AG04450 (cell line): ENCODE measurements at regions of chr7 and their contacts with region 1.

Region 1: GRCh38 chr7:107168233-107169119 is at the start of gene HBP1:
- DNase-seq: peak; percentile 100
- H3K4me3 ChIP-seq: peak within 1 kb of the TSS; percentile 83
- H3K27ac ChIP-seq: peak within 1 kb of the TSS; percentile 99
- H3K27me3 ChIP-seq: no peaks in the 10 kb centered on the region
- CTCF ChIP-seq: no peak
- polyA plus RNA-seq, gene HBP1: 72.7 and 85.2 TPM in 2 replicates

Region 2: GRCh38 chr7:106947244-106947728 is 221.2 kb before region 1 on chr7:
- CTCF ChIA-PET with region 1: interaction called, 11 read pairs
- POLR2A ChIA-PET with region 1: interaction called, 3 read pairs
- DNase-seq: peak; percentile 69
- H3K4me3 ChIP-seq: no peak overlapping the region
- H3K27ac ChIP-seq: no peak overlapping the region
- H3K27me3 ChIP-seq: peaks cover 5% of the 10 kb centered on the region
- CTCF ChIP-seq: peak; percentile 85

Region 3: GRCh38 chr7:107035446-107035845 is 133.0 kb before region 1 on chr7:
- CTCF ChIA-PET with region 1: no interaction called
- POLR2A ChIA-PET with region 1: no interaction called
- DNase-seq: peak; percentile 61
- H3K4me3 ChIP-seq: no peak overlapping the region
- H3K27ac ChIP-seq: no peak overlapping the region
- H3K27me3 ChIP-seq: no peaks in the 10 kb centered on the region
- CTCF ChIP-seq: no peak

Region 4: DNA sequence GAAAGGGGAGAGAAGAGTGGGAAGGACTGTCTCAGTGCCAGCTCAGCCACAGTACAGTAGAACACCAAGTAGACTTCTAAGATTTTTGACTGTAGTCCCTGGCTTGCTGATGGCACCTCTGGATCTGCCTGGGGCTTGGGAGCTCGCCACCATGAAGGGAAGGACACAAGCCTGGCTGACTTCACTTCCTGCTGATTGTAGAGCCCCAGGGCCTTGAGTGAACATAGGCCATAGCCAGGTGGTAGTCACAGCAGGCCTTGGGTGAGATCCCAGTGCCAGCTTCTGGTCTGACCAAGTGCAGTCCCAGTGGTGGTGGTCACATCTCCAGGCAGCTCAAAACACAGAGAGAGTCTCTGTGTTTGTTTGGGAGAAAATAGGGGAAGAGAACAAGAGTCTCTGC is 57.3 kb before region 1 on chr7:
- CTCF ChIA-PET with region 1: no interaction called
- POLR2A ChIA-PET with region 1: no interaction called
- DNase-seq: no peak
- H3K4me3 ChIP-seq: no peak overlapping the region
- H3K27ac ChIP-seq: no peak overlapping the region
- H3K27me3 ChIP-seq: no peaks in the 10 kb centered on the region
- CTCF ChIP-seq: no peak

Region 5: DNA sequence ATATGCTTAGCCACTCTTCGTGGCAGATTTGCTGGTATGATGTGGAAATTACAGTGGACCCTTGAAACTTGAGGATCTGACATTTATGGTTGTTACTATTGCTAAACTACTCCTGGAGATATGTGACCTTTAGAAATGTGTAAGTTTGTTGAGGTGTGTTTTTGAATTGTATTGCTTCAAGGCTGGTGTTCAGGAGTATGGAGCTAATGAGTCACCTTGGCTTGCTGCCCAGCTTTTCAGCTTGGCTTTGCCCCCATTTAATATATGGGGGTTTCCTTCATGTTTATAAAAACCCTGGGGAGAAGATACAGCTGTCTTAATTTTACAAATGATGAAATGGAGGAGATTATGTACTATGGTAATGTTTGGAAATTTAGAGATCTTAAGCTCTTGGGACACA is 11.9 kb after region 1 on chr7:
- CTCF ChIA-PET with region 1: interaction called, 4 read pairs
- POLR2A ChIA-PET with region 1: interaction called, 44 read pairs
- DNase-seq: peak; percentile 75
- H3K4me3 ChIP-seq: no peak overlapping the region
- H3K27ac ChIP-seq: no peak overlapping the region
- H3K27me3 ChIP-seq: no peaks in the 10 kb centered on the region
- CTCF ChIP-seq: no peak

Region 6: DNA sequence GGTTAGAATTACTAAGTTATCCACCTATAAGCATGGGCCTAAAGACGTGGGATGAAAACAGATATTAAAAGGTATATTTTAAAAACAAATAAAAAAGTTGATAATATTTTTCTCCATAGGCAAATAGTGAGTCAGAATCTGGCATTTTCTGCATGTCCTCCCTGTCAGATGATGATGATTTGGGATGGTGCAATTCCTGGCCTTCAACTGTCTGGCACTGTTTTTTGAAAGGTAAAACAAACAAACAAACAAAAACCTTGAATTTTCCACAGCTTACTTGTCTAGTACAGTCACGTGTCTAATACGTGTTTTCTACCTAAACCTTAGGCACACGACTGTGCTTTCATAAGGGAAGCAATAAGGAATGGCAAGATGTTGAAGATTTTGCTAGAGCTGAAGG is 17.8 kb after region 1 on chr7:
- CTCF ChIA-PET with region 1: interaction called, 5 read pairs
- POLR2A ChIA-PET with region 1: interaction called, 44 read pairs
- DNase-seq: no peak
- H3K4me3 ChIP-seq: no peak overlapping the region
- H3K27ac ChIP-seq: no peak overlapping the region
- H3K27me3 ChIP-seq: no peaks in the 10 kb centered on the region
- CTCF ChIP-seq: no peak